ENCODE measurements at regions of chr19 and their contacts with region 1.

Region 1: GRCh38 chr19:2552859-2553258 is 76.9 kb downstream of the GADD45B start:
- DNase-seq: peak; percentile 61
- ATAC-seq: peak; percentile 55
- H3K4me3 ChIP-seq: peak overlapping the region; percentile 67
- H3K27ac ChIP-seq: peak overlapping the region; percentile 6
- H3K4me1 ChIP-seq: peaks cover 27% of the 10 kb centered on the region
- H3K27me3 ChIP-seq: no peaks in the 10 kb centered on the region
- CTCF ChIP-seq: no peak

Region 2: GRCh38 chr19:2462635-2463421 is 90.0 kb before region 1 on chr19:
- CTCF ChIA-PET with region 1: no interaction called
- POLR2A ChIA-PET with region 1: interaction called, 18 read pairs
- intact Hi-C with region 1: no loop called
- DNase-seq: peak; percentile 95
- ATAC-seq: peak; percentile 48
- H3K4me3 ChIP-seq: peak overlapping the region; percentile 90; the same call in 1 of the 2 replicates
- H3K27ac ChIP-seq: peak overlapping the region; percentile 71
- H3K4me1 ChIP-seq: peaks cover 5% of the 10 kb centered on the region; the same call in 1 of the 2 replicates
- H3K27me3 ChIP-seq: no peaks in the 10 kb centered on the region
- CTCF ChIP-seq: no peak

Region 3: GRCh38 chr19:2524838-2525723 is 27.8 kb before region 1 on chr19:
- CTCF ChIA-PET with region 1: no interaction called
- POLR2A ChIA-PET with region 1: no interaction called
- intact Hi-C with region 1: no loop called
- DNase-seq: peak; percentile 87
- ATAC-seq: peak; percentile 89
- H3K4me3 ChIP-seq: peak overlapping the region; percentile 62
- H3K27ac ChIP-seq: peak overlapping the region; percentile 65
- H3K4me1 ChIP-seq: peaks cover 27% of the 10 kb centered on the region
- H3K27me3 ChIP-seq: no peaks in the 10 kb centered on the region
- CTCF ChIP-seq: no peak